ENCODE measurements at regions of chr5 and their contacts with region 1.

Region 1: GRCh38 chr5:166823360-166823759 is 1468.1 kb upstream of the WWC1 start:
- DNase-seq: no peak
- H3K4me3 Mint-ChIP-seq: no peak overlapping the region
- H3K27ac Mint-ChIP-seq: no peak overlapping the region
- H3K4me1 Mint-ChIP-seq: no peaks in the 10 kb centered on the region
- H3K27me3 Mint-ChIP-seq: no peaks in the 10 kb centered on the region

Region 2: DNA sequence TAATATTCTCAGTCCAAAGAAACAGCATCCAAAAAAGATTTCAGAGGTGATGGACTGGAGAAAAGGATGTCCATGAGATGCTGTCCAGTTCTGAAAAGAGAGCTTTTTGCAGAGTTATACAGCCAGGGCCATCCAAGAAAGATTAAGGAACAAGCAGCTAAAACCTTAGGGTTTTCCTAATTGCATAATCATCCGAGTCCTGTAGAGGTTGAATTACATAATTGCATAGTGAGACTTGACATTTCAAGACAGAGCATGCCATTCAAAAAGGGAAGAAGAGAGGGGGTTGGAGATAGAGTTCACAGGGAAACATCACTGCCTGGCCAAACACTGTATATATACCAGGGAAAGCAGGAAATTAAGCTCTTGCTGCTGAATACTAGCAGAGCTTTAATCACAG is 261.1 kb before region 1 on chr5:
- CTCF ChIA-PET with region 1: no interaction called
- intact Hi-C with region 1: no loop called
- DNase-seq: no peak
- H3K4me3 Mint-ChIP-seq: no peak overlapping the region
- H3K27ac Mint-ChIP-seq: no peak overlapping the region
- H3K4me1 Mint-ChIP-seq: no peaks in the 10 kb centered on the region
- H3K27me3 Mint-ChIP-seq: no peaks in the 10 kb centered on the region

Region 3: GRCh38 chr5:166952048-166952447 is 128.7 kb after region 1 on chr5:
- CTCF ChIA-PET with region 1: no interaction called
- intact Hi-C with region 1: loop called (anchors 5 kb)
- DNase-seq: no peak
- H3K4me3 Mint-ChIP-seq: no peak overlapping the region
- H3K27ac Mint-ChIP-seq: no peak overlapping the region
- H3K4me1 Mint-ChIP-seq: no peaks in the 10 kb centered on the region
- H3K27me3 Mint-ChIP-seq: no peaks in the 10 kb centered on the region

Measured in activated naive CD4-positive, alpha-beta T cell treated with anti-CD3 and anti-CD28 coated beads for 36 hours (primary cell).